CD4-positive, alpha-beta memory T cell (primary cell): ENCODE measurements at regions of chr15 and their contacts with region 1.

Region 1: GRCh38 chr15:63683343-63683951 is 86.3 kb downstream of the FBXL22 start:
- DNase-seq: no peak
- H3K4me3 ChIP-seq: no peak overlapping the region
- H3K4me3 Mint-ChIP-seq: no peak overlapping the region
- H3K27ac ChIP-seq: no peak overlapping the region
- H3K27ac Mint-ChIP-seq: peak overlapping the region in 6 of 7 donors; percentile 65 to 87 (median 82)
- H3K4me1 ChIP-seq: no peaks in the 10 kb centered on the region
- H3K4me1 Mint-ChIP-seq: peaks cover 0 to 5% (median 0%) of the 10 kb centered on the region in 4 donors
- H3K27me3 ChIP-seq: no peaks in the 10 kb centered on the region
- H3K27me3 Mint-ChIP-seq: no peaks in the 10 kb centered on the region

Region 2: DNA sequence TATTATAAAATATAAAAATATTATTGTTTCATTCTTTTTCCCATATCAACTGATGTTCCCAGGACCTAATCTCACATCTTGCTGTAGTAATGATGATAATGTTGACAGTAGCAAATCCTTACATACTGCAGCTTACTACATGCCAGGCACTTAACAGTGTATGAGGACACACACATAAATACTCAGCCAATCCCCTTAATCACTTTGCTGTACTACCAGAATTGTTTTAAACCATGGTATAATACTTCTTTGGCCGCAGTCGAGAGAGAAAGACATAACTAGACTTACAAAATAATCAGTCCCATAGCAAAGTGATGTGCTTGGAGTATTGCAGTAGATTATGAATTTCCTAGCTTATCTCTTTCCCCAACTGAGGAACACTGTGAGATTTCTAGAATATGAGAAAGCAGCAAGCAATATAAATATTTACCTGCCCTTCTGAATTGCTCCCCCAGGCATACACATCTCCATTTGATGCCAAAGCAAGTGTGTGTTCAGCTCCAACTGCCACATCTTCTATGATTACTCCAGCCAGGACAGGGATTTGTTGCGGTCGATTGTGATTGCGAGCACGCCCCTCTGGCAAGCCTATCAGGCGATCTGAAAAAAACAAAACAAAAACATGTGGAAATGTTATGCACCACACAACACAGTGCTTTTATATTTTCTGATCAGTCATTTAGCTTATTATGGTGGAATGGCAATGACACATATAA is 53.3 kb before region 1 on chr15:
- CTCF ChIA-PET with region 1: no interaction called
- POLR2A ChIA-PET with region 1: no interaction called
- intact Hi-C with region 1: loop called (anchors 10 kb)
- DNase-seq: no peak
- H3K4me3 ChIP-seq: no peak overlapping the region
- H3K4me3 Mint-ChIP-seq: no peak overlapping the region
- H3K27ac ChIP-seq: no peak overlapping the region
- H3K27ac Mint-ChIP-seq: peak overlapping the region in 1 of 7 donors; percentile 85
- H3K4me1 ChIP-seq: no peaks in the 10 kb centered on the region
- H3K4me1 Mint-ChIP-seq: no peaks in the 10 kb centered on the region
- H3K27me3 ChIP-seq: no peaks in the 10 kb centered on the region
- H3K27me3 Mint-ChIP-seq: no peaks in the 10 kb centered on the region

Region 3: GRCh38 chr15:64093627-64094417 is 410.4 kb after region 1 on chr15 and contains the start of gene CIAO2A:
- CTCF ChIA-PET with region 1: no interaction called
- POLR2A ChIA-PET with region 1: no interaction called
- intact Hi-C with region 1: no loop called
- DNase-seq: peak; percentile 86 to 96 (median 90)
- H3K4me3 ChIP-seq: peak within 1 kb of the TSS; percentile 87 to 98
- H3K4me3 Mint-ChIP-seq: peak within 1 kb of the TSS; percentile 92 to 99 (median 98)
- H3K27ac ChIP-seq: peak within 1 kb of the TSS; percentile 85
- H3K27ac Mint-ChIP-seq: peak within 1 kb of the TSS; percentile 90 to 100 (median 98)
- H3K4me1 ChIP-seq: peaks cover 65% of the 10 kb centered on the region
- H3K4me1 Mint-ChIP-seq: peaks cover 55 to 86% (median 69%) of the 10 kb centered on the region in 4 donors
- H3K27me3 ChIP-seq: no peaks in the 10 kb centered on the region
- H3K27me3 Mint-ChIP-seq: no peaks in the 10 kb centered on the region
- total RNA-seq, gene CIAO2A: 35.0 to 36.4 TPM